OCI-LY7 (cell line): ENCODE measurements at regions of chr2 and their contacts with region 1.

Region 1: GRCh38 chr2:95165129-95166064 is at the start of gene ZNF2:
- DNase-seq: peak; percentile 98
- H3K4me3 ChIP-seq: peak within 1 kb of the TSS; percentile 97
- H3K27ac ChIP-seq: peak within 1 kb of the TSS; percentile 46
- H3K4me1 ChIP-seq: peaks cover 17% of the 10 kb centered on the region
- CTCF ChIP-seq: no peak
- total RNA-seq, gene ZNF2: 1.6 and 4.6 TPM in 2 replicates

Region 2: GRCh38 chr2:95207111-95207961 is 41.9 kb after region 1 on chr2 and contains the start of gene ZNF892:
- CTCF ChIA-PET with region 1: no interaction called
- POLR2A ChIA-PET with region 1: interaction called, 11 read pairs
- intact Hi-C with region 1: loop called (anchors 2 kb)
- DNase-seq: peak; percentile 88
- H3K4me3 ChIP-seq: peak within 1 kb of the TSS; percentile 83
- H3K27ac ChIP-seq: peak within 1 kb of the TSS; percentile 32
- H3K4me1 ChIP-seq: peaks cover 4% of the 10 kb centered on the region
- CTCF ChIP-seq: peak; percentile 63
- total RNA-seq, gene ZNF892: 3.1 and 4.7 TPM in 2 replicates

Region 3: DNA sequence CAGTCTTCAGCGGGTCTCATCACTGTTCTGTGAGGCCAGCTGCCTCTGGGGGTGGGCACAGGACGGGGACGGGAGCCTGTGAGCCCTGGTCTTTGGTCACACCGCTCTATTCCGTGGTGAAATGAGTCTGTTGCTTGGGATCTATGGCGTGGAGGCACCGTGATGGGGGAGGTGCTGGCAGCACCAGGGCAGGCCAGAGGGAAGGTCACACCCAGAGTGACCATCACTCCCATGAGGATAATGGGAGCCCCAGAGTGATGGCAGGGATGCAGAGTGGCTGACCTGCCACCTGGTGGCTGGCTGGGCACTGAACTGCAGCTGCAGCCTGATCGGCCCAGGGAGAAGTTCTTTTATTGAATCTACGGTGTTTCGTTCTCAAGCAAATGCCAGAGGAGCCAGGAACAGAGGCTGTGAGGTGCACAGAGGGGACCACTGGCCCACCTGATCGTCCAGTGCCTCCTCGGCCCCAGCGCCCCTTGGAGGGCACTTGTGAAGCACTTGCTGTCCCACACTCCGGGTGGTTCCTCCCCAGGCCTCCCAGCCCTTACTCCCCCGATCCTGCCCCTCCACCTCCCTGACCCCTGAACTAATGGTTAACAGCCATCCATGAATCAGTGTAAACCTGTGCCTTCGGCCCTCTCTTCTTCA is 149.7 kb after region 1 on chr2:
- CTCF ChIA-PET with region 1: no interaction called
- POLR2A ChIA-PET with region 1: no interaction called
- intact Hi-C with region 1: no loop called
- DNase-seq: peak; percentile 9
- H3K4me3 ChIP-seq: no peak overlapping the region
- H3K27ac ChIP-seq: no peak overlapping the region
- H3K4me1 ChIP-seq: no peaks in the 10 kb centered on the region
- CTCF ChIP-seq: peak; percentile 59